ENCODE measurements at regions of chr2 and their contacts with region 1.

Region 1: DNA sequence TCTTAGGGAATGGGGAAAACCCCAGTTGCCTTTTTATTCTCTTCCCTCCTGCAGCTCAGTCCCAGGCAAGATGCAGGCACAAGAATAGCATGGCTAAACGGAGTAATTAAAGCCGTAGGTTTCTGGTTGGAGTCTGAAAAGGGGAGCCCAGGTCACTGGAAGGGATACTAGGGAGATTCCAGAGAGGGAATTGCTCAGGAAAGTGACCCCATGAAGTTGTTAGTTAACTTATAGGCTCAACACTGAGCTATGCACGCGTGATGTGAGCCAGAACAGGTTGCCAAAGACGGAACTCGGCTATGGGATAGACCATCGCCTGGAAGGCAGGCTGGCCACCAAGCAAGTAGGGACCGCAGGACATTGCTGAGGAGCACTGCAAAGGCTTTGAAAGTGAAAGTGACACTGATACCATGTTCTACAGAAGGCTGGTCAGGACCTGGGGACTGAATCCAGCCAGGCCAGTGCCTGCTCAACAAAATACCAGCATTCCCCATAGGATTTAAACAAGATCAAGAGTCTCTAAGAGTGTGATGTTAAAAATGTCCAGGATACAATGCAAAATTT is 7.3 kb downstream of the FARP2 start:
- DNase-seq: no peak
- ATAC-seq: no peak
- H3K4me3 Mint-ChIP-seq: no peak overlapping the region
- H3K27ac Mint-ChIP-seq: no peak overlapping the region
- H3K4me1 Mint-ChIP-seq: peaks cover 35% of the 10 kb centered on the region
- H3K27me3 Mint-ChIP-seq: no peaks in the 10 kb centered on the region
- CTCF ChIP-seq: no peak

Region 2: DNA sequence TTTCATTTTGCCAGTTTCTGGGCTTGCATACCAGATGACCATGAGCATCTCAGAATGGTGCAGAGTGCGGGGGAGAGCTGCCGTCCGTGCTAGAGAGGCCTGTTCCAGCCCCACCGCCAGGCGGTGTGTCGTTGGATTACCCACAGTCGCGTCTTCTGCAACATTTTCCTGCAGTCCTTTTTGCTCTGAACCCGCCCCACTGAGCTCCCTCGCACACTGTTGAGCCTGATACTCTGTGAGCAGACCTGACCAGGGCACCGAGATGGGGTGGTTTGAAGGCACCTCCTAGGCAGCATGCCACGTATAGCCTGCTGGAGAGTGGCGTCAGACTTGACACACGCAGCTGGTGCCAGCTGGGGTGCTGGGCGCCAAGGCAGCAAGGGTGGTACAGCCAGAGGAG is 195.0 kb before region 1 on chr2:
- CTCF ChIA-PET with region 1: no interaction called
- POLR2A ChIA-PET with region 1: no interaction called
- DNase-seq: no peak
- ATAC-seq: no peak
- H3K4me3 Mint-ChIP-seq: no peak overlapping the region
- H3K27ac Mint-ChIP-seq: no peak overlapping the region
- H3K4me1 Mint-ChIP-seq: no peaks in the 10 kb centered on the region
- H3K27me3 Mint-ChIP-seq: no peaks in the 10 kb centered on the region; the same call in 1 of the 2 replicates
- CTCF ChIP-seq: no peak

Region 3: GRCh38 chr2:241199897-241200821 is 163.2 kb before region 1 on chr2:
- CTCF ChIA-PET with region 1: no interaction called
- POLR2A ChIA-PET with region 1: no interaction called
- DNase-seq: no peak
- ATAC-seq: no peak
- H3K4me3 Mint-ChIP-seq: no peak overlapping the region
- H3K27ac Mint-ChIP-seq: no peak overlapping the region
- H3K4me1 Mint-ChIP-seq: 0 out of 2 replicates have a peak, but pooled peaks cover 3% of the 10 kb centered on the region
- H3K27me3 Mint-ChIP-seq: no peaks in the 10 kb centered on the region
- CTCF ChIP-seq: no peak

Region 4: DNA sequence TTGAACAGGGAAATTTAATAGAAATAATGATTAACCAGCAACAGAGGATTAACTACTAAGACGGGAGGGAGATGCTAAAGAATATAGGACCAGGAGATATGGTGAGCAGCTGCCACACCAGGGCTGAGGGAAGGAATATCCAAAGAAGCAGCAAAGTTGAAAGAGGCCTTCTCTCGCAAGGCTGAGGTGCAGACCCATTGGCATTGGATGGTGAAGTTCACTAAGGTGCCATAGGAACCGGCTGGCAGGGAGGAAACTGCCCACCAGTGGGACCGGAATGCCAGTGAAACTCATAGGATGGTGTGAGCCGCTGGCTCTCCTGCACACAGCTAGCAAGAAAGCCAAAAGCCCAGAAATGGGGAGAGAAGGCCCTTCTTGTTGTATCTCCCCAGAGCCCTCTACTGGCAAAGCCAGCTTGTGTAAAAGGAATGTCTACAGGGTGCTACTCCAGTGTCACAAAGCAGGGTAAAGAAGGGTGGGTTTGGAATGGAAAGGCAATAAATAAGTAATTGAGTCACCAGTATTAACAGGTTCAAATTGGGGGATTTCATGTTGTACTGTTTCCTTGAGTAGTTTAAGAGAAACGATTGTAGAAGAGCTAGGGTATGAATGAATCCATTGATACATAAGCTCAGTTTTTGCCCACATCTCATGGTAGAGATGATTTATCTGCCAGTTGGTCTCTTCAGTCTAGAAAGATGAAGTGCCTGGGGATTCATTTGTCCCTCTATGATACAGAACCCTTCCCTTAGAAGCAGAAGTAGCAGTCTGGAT is 28.7 kb after region 1 on chr2:
- CTCF ChIA-PET with region 1: interaction called, 12 read pairs
- POLR2A ChIA-PET with region 1: no interaction called
- DNase-seq: peak; percentile 27
- ATAC-seq: peak; percentile 97
- H3K4me3 Mint-ChIP-seq: no peak overlapping the region
- H3K27ac Mint-ChIP-seq: no peak overlapping the region
- H3K4me1 Mint-ChIP-seq: 0 out of 2 replicates have a peak, but pooled peaks cover 6% of the 10 kb centered on the region
- H3K27me3 Mint-ChIP-seq: no peaks in the 10 kb centered on the region
- CTCF ChIP-seq: no peak